ENCODE measurements at regions of chr5 and their contacts with region 1.

Region 1: GRCh38 chr5:55176176-55176818 is 3.3 kb upstream of the CDC20B start:
- DNase-seq: peak; percentile 82

Region 2: GRCh38 chr5:54792611-54793404 is 383.5 kb before region 1 on chr5:
- in situ Hi-C with region 1: no loop called
- DNase-seq: no peak

Region 3: GRCh38 chr5:54895816-54896341 is 280.4 kb before region 1 on chr5:
- in situ Hi-C with region 1: no loop called
- DNase-seq: peak; percentile 28

Region 4: DNA sequence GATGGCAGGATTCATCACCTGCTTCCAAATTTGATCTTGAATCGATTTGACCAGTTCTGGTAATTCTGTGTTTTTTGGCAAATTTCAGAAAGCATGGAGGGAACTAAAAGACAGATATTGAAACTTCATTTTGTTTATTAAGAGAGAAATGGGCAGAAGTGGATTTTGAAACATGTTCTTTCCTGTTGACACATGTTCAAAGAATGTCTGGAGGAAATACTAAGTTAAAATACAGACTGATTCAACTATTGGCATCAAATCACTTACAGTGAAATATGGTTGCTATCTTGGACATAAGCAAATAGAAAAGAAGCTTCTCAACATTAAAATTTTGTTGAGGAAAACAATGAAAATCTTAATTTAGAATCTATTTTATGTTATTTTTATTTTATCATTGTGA is 171.6 kb before region 1 on chr5:
- in situ Hi-C with region 1: no loop called
- DNase-seq: no peak

Region 5: DNA sequence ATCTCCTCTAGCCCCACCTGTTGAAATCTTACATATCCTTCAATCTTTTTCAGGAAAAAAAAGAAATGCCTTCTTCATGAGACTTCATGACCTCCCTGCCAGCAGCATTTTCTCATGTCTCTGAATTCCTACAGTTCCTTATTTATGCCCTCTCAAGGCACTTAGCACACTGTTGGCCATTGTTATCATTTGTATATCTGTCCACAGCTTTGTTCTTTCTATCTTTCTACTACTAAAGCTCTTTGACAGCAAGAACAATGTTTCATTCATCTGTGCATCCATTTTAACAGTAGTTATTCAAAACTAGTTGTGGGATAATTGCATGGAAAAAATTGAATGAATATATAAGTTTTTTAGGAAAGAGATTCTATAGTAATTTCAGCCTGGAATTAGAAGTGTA is 94.8 kb before region 1 on chr5:
- in situ Hi-C with region 1: no loop called
- DNase-seq: no peak

Region 6: DNA sequence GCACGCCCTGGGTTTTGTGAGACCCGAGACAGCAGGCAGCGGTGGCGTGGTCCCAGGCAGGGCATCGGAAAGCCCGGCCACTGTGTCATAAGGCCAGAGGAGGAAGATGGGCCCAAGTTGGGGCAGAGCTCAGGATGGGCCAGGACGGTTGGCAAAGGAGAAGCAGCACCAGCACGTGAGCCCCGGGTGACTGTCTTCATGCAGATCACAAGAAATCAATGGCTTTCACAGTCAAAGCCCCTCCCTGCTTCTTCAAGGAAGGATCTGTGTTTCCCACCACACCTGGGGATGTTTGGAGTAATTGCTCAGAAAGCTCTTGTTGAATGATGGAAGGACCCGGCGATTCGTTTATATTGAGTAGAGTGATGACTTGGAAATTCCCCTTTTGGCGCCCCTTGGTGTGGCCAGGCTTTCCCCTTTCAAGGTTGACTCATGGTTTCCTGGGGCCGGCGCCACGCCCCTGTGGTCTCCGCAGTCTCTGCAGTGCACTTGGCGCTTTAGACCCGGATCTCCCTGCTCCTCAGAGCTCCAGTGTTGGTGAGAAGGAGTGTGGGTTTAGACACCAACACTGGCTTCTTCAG is 726.9 kb after region 1 on chr5:
- in situ Hi-C with region 1: loop called (anchors 25 kb)
- DNase-seq: peak; percentile 48